Activated B cell treated with CpG ODN at 0.5 μM for 24 hours (primary cell): ENCODE measurements at regions of chr22 and their contacts with region 1.

Region 1: GRCh38 chr22:19619144-19620009 is 94.9 kb upstream of the SEPTIN5 start:
- DNase-seq: peak; percentile 31
- ATAC-seq: peak; percentile 43
- H3K4me3 Mint-ChIP-seq: peak overlapping the region; percentile 57
- H3K27ac Mint-ChIP-seq: peak overlapping the region; percentile 13
- H3K4me1 Mint-ChIP-seq: peaks cover 59% of the 10 kb centered on the region
- H3K27me3 Mint-ChIP-seq: peaks cover 20% of the 10 kb centered on the region
- CTCF ChIP-seq: no peak

Region 2: GRCh38 chr22:19085233-19085718 is 534.1 kb before region 1 on chr22:
- CTCF ChIA-PET with region 1: no interaction called
- POLR2A ChIA-PET with region 1: no interaction called
- intact Hi-C with region 1: loop called (anchors 1 kb)
- DNase-seq: no peak
- ATAC-seq: no peak
- H3K4me3 Mint-ChIP-seq: peak overlapping the region; percentile 63
- H3K27ac Mint-ChIP-seq: peak overlapping the region; percentile 67
- H3K4me1 Mint-ChIP-seq: peaks cover 32% of the 10 kb centered on the region
- H3K27me3 Mint-ChIP-seq: no peaks in the 10 kb centered on the region
- CTCF ChIP-seq: no peak

Region 3: DNA sequence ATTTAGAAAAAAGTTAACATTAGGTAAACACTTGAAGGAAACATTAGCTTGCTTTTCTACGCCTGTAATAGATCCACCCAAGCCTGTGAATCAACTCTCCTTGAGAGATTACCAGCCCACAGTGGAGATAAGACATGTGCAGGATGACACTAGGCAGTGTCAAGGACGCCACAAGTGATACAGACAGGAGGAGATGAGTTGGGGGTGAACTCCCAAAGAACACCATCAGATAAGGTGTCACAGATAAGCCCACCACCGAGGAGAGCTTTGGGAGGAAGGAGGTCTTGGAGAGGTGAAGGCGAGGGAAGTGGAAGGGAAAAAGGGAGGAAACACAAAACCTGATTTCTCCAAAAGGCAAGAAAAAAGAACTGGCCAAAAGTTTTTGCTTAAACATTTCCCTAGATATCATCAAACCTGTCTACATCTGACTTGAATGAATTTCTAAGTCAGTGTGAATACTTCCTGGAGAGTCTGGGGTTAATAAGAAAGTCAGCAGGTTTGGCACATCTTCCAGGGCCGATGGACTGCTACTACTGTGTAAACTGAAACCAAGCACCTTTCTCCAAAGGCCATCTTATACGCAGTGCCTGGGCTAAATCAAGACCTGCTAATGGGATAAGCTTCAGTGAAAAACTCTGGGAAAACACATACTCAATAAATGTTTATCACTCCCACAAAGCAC is 343.3 kb before region 1 on chr22:
- CTCF ChIA-PET with region 1: no interaction called
- POLR2A ChIA-PET with region 1: no interaction called
- intact Hi-C with region 1: no loop called
- DNase-seq: no peak
- ATAC-seq: no peak
- H3K4me3 Mint-ChIP-seq: no peak overlapping the region
- H3K27ac Mint-ChIP-seq: no peak overlapping the region
- H3K4me1 Mint-ChIP-seq: no peaks in the 10 kb centered on the region
- H3K27me3 Mint-ChIP-seq: peaks cover 7% of the 10 kb centered on the region
- CTCF ChIP-seq: no peak

Region 4: GRCh38 chr22:19361501-19362103 is 257.8 kb before region 1 on chr22:
- CTCF ChIA-PET with region 1: no interaction called
- POLR2A ChIA-PET with region 1: no interaction called
- intact Hi-C with region 1: loop called (anchors 2 kb)
- DNase-seq: peak; percentile 41
- ATAC-seq: peak; percentile 90
- H3K4me3 Mint-ChIP-seq: peak overlapping the region; percentile 71
- H3K27ac Mint-ChIP-seq: peak overlapping the region; percentile 95
- H3K4me1 Mint-ChIP-seq: peaks cover 80% of the 10 kb centered on the region
- H3K27me3 Mint-ChIP-seq: no peaks in the 10 kb centered on the region
- CTCF ChIP-seq: no peak

Region 5: DNA sequence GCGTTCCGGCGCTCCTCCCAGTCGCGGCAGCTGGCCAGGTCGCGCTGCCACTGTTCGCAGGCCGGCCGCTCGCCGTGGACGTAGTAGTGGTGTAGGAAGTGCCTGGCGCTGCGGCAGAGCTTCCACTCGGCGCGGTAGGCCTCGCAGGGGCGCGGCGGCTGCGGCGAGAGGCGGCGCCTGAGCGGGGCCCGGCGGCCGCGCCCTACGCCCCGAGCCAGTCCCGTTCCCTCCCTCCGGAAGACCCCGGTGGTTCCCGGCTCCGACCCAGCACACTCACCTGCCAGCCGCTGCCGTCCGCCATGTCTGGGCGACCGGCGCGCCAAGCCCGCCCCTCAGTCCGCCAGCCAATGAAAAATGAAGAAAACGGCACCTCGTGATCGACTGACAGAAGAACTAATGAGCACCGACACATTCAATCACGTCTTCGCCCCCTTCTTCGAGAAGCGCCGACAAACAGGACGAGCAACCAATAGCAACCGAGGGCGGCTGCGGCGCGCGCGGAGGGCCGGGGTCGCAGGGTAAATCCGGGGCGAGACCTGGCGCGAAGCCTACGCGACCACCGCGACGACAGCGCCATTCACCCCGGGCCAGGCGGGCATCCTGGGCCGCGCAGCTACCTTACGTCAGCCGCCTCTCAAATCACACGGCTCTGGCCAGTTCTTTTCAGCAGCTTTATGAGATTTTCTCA is 171.8 kb before region 1 on chr22 and contains the start of gene C22orf39:
- CTCF ChIA-PET with region 1: no interaction called
- POLR2A ChIA-PET with region 1: no interaction called
- intact Hi-C with region 1: loop called (anchors 1 kb)
- DNase-seq: peak; percentile 78
- ATAC-seq: peak; percentile 85
- H3K4me3 Mint-ChIP-seq: peak within 1 kb of the TSS; percentile 95
- H3K27ac Mint-ChIP-seq: peak within 1 kb of the TSS; percentile 98
- H3K4me1 Mint-ChIP-seq: peaks cover 31% of the 10 kb centered on the region
- H3K27me3 Mint-ChIP-seq: no peaks in the 10 kb centered on the region
- CTCF ChIP-seq: no peak
- total RNA-seq, gene C22orf39: 35.7 and 43.0 TPM in 2 replicates

Region 6: GRCh38 chr22:19597399-19597735 is 22.0 kb before region 1 on chr22:
- CTCF ChIA-PET with region 1: no interaction called
- POLR2A ChIA-PET with region 1: interaction called, 9 read pairs
- intact Hi-C with region 1: loop called (anchors 2 kb)
- DNase-seq: no peak
- ATAC-seq: peak; percentile 58
- H3K4me3 Mint-ChIP-seq: peak overlapping the region; percentile 46
- H3K27ac Mint-ChIP-seq: peak overlapping the region; percentile 50
- H3K4me1 Mint-ChIP-seq: peaks cover 24% of the 10 kb centered on the region
- H3K27me3 Mint-ChIP-seq: no peaks in the 10 kb centered on the region
- CTCF ChIP-seq: no peak